ENCODE measurements at regions of chr1 and their contacts with region 1.

Region 1: DNA sequence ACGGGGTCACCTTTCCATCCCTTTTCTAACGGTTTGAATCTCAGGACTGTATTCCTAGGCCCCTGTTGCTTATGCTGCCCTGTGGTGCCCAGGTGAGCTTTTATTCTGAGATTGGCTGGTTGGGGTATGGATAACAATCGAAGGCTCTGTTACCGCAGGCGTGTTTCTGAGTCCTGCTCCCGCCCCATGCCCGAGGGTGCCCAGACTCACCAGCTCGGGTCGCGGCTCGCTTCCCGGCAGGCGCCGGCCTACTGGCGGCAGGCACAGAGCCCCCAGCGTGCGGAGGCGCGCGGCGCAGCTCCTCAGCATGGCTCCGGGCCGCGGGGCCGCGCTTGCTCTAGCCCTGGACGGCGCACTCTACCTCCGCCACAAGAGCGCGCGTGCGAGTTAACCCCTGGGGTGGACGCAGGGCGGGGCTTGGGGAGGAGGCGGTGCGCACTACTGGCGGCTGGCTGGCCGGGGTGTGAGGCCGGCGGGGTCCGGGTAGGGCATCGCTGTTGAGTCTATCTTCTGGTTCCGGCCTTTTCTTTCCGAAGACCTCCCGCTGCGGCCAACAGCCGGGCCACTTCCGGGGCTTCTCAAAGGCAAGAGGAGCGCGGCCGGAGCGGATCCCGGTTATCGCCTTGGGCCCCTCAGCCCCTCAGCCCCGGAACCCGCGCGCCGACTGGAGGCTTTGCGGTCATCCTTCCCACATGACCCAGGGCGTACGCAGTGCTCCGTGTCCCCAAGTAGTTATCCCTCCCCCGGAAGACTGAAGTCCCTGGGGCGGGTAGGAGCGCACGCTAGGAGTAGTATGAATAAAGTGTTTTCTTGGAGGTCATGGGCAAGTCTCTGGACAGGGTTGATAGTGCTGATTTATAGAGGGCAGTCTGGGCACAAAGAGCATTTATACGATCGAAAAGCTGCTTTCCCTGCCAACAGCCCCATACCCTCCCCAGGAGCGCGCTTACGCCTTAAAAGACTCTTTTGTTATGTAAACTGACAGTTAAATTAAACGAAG is at the start of gene THEM4:
- DNase-seq: peak; percentile 98 to 99
- H3K4me3 ChIP-seq: peak within 1 kb of the TSS; percentile 74
- H3K4me3 Mint-ChIP-seq: peak within 1 kb of the TSS; percentile 83
- H3K27ac Mint-ChIP-seq: peak within 1 kb of the TSS; percentile 85
- H3K4me1 ChIP-seq: no peaks in the 10 kb centered on the region
- H3K4me1 Mint-ChIP-seq: peaks cover 4% of the 10 kb centered on the region
- H3K27me3 ChIP-seq: no peaks in the 10 kb centered on the region
- H3K27me3 Mint-ChIP-seq: no peaks in the 10 kb centered on the region
- CTCF ChIP-seq: peak; percentile 24 to 40
- total RNA-seq, gene THEM4: 7.1 and 9.5 TPM in 2 replicates

Region 2: GRCh38 chr1:151594143-151594625 is 315.3 kb before region 1 on chr1:
- CTCF ChIA-PET with region 1: no interaction called
- POLR2A ChIA-PET with region 1: no interaction called
- intact Hi-C with region 1: no loop called
- DNase-seq: peak; percentile 88 to 90
- H3K4me3 ChIP-seq: no peak overlapping the region
- H3K4me3 Mint-ChIP-seq: peak overlapping the region; percentile 69
- H3K27ac Mint-ChIP-seq: peak overlapping the region; percentile 74
- H3K4me1 ChIP-seq: peaks cover 18% of the 10 kb centered on the region
- H3K4me1 Mint-ChIP-seq: peaks cover 41% of the 10 kb centered on the region
- H3K27me3 ChIP-seq: no peaks in the 10 kb centered on the region
- H3K27me3 Mint-ChIP-seq: no peaks in the 10 kb centered on the region
- CTCF ChIP-seq: peak; percentile 92 to 95

Region 3: GRCh38 chr1:151867785-151868411 is 41.6 kb before region 1 on chr1:
- CTCF ChIA-PET with region 1: no interaction called
- POLR2A ChIA-PET with region 1: no interaction called
- intact Hi-C with region 1: no loop called
- DNase-seq: no peak
- H3K4me3 ChIP-seq: no peak overlapping the region
- H3K4me3 Mint-ChIP-seq: no peak overlapping the region
- H3K27ac Mint-ChIP-seq: no peak overlapping the region
- H3K4me1 ChIP-seq: no peaks in the 10 kb centered on the region
- H3K4me1 Mint-ChIP-seq: no peaks in the 10 kb centered on the region
- H3K27me3 ChIP-seq: no peaks in the 10 kb centered on the region
- H3K27me3 Mint-ChIP-seq: peaks cover 2% of the 10 kb centered on the region
- CTCF ChIP-seq: no peak

Region 4: DNA sequence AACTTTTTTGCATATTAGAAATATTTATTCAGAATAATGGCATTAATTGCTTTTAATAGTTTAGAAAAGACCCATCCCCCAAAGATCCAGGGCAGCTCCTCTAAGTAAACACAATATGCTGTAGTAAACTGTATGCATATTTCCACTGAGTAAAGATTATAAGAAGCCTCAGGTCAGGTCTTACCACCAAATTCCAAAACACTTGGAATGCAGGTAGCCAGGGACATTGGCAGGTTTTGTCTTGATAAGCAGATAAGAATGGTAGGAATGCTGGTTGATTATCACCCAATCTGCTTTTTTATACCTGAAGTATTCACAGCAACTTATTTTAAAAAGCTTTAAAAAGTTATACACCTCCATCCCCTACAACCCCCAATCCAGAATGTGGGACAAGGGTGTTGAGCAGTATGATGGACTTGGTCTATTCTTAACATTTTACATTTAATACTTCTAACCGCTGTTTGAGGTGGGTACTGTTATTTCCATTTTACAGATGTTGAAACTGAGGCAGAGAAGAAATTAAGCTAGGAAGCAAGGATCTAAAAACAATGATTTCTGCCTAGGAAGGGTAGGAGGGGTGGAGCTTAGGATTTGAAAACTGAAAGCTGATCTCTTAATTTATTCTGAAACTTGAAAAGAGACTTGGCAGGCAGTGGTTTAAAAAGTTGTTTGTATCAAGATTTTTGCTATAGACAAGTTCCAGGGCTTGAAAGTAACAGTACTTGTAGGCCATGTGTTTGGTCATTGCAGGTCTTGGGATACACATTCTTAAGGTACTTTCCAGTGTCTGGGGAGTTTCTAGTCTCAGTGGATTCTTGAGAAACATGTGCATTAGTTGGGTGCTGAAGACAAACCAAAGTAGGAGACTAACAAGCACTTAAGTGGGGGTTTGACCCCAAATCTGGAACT is 15.5 kb after region 1 on chr1:
- CTCF ChIA-PET with region 1: interaction called, 5 read pairs
- POLR2A ChIA-PET with region 1: no interaction called
- intact Hi-C with region 1: loop called (anchors 1 kb)
- DNase-seq: peak; percentile 56 to 67
- H3K4me3 ChIP-seq: no peak overlapping the region
- H3K4me3 Mint-ChIP-seq: no peak overlapping the region
- H3K27ac Mint-ChIP-seq: peak overlapping the region; percentile 60
- H3K4me1 ChIP-seq: peaks cover 38% of the 10 kb centered on the region
- H3K4me1 Mint-ChIP-seq: peaks cover 14% of the 10 kb centered on the region
- H3K27me3 ChIP-seq: no peaks in the 10 kb centered on the region
- H3K27me3 Mint-ChIP-seq: no peaks in the 10 kb centered on the region
- CTCF ChIP-seq: no peak

Region 5: GRCh38 chr1:151980287-151981177 is 71.1 kb after region 1 on chr1:
- CTCF ChIA-PET with region 1: no interaction called
- POLR2A ChIA-PET with region 1: no interaction called
- intact Hi-C with region 1: no loop called
- DNase-seq: peak in 1 of 2 experiments; percentile 43
- H3K4me3 ChIP-seq: no peak overlapping the region
- H3K4me3 Mint-ChIP-seq: peak overlapping the region; percentile 4
- H3K27ac Mint-ChIP-seq: peak overlapping the region; percentile 85
- H3K4me1 ChIP-seq: peaks cover 98% of the 10 kb centered on the region
- H3K4me1 Mint-ChIP-seq: peaks cover 72% of the 10 kb centered on the region
- H3K27me3 ChIP-seq: no peaks in the 10 kb centered on the region
- H3K27me3 Mint-ChIP-seq: no peaks in the 10 kb centered on the region
- CTCF ChIP-seq: no peak

Measured in Caco-2 (cell line).